BJ (cell line): ENCODE measurements at regions of chr11 and their contacts with region 1.

Region 1: DNA sequence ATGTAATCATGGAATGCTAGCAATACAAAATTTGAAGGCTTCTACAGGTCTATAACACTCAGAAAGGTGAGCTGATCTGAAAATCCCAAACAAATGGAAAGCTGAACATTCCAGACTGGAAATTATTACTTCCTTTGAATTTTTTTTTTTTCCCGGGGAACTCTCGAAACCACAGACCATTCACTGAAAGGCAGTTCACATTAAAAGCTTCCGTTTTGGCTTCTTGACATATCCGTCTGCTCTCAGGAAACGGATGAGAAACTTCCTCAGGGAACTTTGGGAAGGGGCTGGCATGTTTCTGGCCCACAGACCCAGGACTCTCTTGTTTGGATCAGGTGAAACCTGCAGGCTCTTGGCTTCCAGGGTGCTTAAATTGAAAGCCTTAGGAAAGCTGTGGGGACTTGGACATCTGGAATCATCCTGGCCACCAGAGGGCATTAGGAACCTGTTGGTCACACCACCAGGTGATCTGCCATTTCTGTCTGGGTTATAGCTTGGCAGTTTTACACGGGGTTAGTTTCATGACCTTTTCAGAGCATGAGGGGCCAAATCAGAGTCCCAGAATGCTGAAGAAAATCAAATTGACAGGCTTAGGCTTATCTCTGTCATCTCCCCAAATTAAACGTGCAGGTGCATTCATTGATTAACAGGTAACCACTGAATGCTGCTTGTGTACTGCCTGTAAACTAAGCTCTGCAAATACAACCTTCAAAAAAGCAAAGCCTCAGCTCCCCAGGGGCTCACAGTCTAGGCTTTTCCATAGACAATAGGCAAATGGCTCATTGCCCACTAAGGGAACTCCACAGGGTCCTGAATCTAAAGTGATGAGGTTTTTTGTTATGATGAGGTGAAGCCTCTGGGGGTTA is 22.7 kb upstream of the GRAMD1B start:
- DNase-seq: no peak
- H3K4me3 ChIP-seq: no peak overlapping the region
- H3K27me3 ChIP-seq: peaks cover 2% of the 10 kb centered on the region
- CTCF ChIP-seq: peak; percentile 82

Region 2: DNA sequence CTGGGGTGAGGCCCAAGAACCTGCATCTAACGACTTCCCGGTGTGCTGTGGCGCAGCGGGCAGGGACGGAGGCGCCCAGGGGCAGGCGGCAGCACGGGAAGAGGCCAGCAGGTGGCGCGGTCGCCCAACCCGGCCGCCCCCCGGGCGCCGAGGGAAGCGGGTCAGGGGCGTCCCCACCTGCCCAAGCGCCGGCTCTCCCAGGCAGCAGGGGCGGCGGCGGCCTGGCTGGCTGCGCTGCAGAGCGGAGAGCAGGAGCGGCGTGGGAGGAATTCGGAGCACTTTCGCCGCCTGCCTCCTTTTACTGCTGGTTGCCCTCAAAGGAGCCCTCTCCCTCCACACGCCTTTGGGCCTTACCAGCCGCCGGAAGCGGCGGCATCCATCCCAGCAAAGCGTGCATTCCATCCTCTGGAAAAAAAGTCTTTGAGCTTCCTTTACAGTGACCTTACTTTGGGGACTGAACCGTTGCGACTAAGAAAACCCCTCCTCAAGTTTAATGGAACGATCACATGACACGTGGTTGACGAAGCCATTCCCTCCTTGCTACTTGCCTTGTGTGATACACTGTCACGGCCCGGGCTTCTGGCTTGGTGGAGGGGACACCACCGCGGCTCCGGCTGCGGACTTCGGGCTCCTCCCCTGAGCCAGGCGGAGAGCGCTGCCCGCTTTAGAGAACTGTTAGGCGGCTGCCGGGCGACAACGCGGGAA is 105.5 kb before region 1 on chr11:
- CTCF ChIA-PET with region 1: interaction called, 22 read pairs
- POLR2A ChIA-PET with region 1: no interaction called
- DNase-seq: no peak
- H3K4me3 ChIP-seq: peak overlapping the region; percentile 31
- H3K27me3 ChIP-seq: no peaks in the 10 kb centered on the region
- CTCF ChIP-seq: peak; percentile 66

Region 3: DNA sequence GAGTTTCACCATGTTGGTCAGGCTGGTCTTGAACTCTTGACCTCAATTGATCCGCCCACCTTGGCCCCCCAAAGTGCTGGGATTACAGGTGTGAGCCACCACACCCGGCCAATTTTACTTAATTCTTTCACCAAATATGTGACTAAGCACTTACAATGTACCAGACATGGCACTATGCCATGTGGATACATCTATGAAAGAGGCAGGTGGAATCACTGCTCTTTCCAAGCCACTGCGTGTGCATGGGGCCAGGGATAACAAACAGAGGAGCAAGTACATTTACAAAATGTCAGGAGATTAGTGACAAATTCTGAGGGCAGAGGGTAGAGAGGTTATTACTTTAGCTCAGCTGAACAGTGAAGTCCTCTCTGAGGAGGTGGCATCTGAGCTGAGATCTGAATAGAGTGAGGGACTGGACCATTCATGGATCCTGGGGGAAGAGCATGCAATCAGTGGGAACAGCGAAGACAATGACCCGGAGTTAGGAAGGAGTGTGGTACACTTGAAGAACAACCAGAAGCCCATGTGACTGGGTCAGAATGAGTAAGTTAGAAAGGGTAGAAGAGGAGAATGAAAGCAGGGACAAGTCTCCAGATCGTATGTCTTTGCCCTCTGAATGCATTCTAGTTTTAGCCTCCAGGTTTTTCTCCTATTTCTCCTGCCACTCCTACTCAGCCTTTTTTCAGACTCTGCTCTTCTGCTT is 15.6 kb before region 1 on chr11:
- CTCF ChIA-PET with region 1: interaction called, 10 read pairs
- POLR2A ChIA-PET with region 1: no interaction called
- DNase-seq: no peak
- H3K4me3 ChIP-seq: no peak overlapping the region
- H3K27me3 ChIP-seq: peaks cover 4% of the 10 kb centered on the region
- CTCF ChIP-seq: no peak

Region 4: DNA sequence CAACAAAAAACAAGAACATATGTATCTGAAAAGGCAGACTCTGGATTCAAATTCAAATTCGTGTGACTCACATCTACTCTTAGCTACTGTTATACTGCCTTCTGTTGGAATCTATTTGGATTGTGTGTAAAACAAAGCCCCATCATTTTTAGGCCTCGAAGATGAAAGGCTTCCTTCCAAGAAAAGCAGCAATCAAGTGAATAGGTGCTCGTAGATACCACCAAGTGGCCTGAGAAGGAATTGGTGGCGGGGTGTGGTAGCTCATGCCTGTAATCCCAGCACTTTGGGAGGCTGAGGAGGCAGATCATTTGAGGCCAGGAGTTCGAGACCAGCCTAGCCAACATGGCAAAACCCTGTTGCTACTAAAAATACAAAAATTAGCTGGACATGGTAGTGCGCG is 26.9 kb after region 1 on chr11:
- CTCF ChIA-PET with region 1: interaction called, 13 read pairs
- POLR2A ChIA-PET with region 1: no interaction called
- DNase-seq: no peak
- H3K4me3 ChIP-seq: no peak overlapping the region
- H3K27me3 ChIP-seq: no peaks in the 10 kb centered on the region
- CTCF ChIP-seq: peak; percentile 35

Region 5: DNA sequence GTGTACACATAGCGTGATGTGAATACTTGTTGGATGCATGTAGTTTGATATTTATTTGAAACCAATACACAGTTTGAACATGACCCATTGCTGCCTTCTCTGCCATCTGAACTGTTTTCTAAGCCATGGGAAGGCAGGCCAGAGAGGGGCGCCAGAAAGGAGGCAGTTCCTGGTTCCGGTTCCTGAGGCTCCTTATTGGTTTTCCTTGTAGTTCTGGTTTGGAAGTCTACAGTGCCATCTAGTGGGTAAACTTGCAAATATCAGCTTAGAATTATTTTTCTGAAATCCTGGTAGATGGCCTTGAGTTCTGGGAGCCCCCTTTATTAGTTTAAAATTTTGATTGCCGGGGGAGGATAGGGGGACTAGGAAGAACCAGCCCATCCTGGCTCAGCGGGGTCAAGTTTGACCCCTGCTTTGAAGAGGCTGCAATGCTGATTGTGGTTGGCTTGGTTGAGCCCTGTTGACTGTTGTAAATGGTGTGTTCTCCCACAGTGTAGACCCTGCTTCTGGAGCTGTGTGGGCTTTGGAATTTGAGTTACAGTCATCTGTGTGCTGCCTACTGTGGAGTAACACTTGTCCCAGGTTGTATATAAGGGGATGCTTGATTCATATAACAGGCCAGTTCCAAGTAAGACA is 71.1 kb after region 1 on chr11:
- CTCF ChIA-PET with region 1: interaction called, 158 read pairs
- POLR2A ChIA-PET with region 1: interaction called, 4 read pairs
- DNase-seq: no peak
- H3K4me3 ChIP-seq: no peak overlapping the region
- H3K27me3 ChIP-seq: no peaks in the 10 kb centered on the region
- CTCF ChIP-seq: peak; percentile 69